Activated naive CD8-positive, alpha-beta T cell treated with anti-CD3 and anti-CD28 coated beads, Interleukin-2, amount 10 ng/mL, durations not matched to agents 7 days and 5 days (primary cell): ENCODE measurements at regions of chr12 and their contacts with region 1.

Region 1: GRCh38 chr12:123601602-123602489 is at the start of gene DDX55:
- DNase-seq: peak; percentile 89
- ATAC-seq: peak; percentile 90
- H3K4me3 Mint-ChIP-seq: peak within 1 kb of the TSS; percentile 93
- H3K27ac Mint-ChIP-seq: peak within 1 kb of the TSS; percentile 99
- H3K4me1 Mint-ChIP-seq: peaks cover 33% of the 10 kb centered on the region
- H3K27me3 Mint-ChIP-seq: no peaks in the 10 kb centered on the region
- total RNA-seq, gene DDX55: 34.5 to 39.3 TPM

Region 2: DNA sequence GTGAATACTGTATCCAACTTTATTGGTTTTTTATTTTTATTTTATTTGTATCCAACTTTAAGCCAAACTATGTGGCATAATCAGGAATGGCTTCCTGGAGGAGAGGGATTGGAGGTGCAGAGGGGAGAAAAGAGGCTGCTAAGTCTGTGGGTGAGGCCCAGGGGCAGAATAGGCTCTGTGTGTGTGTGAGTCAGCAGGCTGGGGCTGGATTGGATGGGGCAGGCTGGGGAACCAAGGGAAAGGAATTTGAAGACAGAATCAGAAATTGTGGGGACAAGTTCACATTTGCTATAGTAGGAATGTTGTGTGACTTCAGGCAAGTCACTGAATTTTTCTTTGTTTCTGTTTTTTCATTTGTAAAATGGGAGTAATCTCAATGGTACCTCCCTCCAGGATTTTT is 55.6 kb before region 1 on chr12:
- POLR2A ChIA-PET with region 1: no interaction called
- DNase-seq: no peak
- ATAC-seq: no peak
- H3K4me3 Mint-ChIP-seq: no peak overlapping the region
- H3K27ac Mint-ChIP-seq: no peak overlapping the region
- H3K4me1 Mint-ChIP-seq: no peaks in the 10 kb centered on the region
- H3K27me3 Mint-ChIP-seq: peaks cover 14% of the 10 kb centered on the region

Region 3: DNA sequence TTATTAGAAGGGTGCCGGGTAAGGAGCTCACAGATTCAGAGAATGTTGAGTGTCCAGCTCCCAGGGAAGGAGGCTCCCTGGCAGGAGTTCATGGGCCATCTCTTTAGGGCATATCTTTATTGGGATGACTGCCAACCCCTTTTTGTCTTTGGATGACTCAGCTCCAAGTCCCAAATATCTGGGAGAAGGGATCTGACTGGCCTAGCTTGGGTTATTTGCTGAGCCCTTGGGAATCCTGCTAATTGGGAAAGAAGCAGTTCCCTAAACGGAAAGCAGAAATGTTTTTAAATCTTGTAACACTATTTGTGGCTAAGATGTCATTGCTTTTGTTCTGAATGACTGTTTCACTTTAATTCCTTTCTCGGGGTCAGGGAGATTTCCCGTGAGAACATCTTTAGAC is 12.7 kb after region 1 on chr12:
- POLR2A ChIA-PET with region 1: interaction called, 11 read pairs
- DNase-seq: no peak
- ATAC-seq: no peak
- H3K4me3 Mint-ChIP-seq: no peak overlapping the region
- H3K27ac Mint-ChIP-seq: no peak overlapping the region
- H3K4me1 Mint-ChIP-seq: peaks cover 5% of the 10 kb centered on the region
- H3K27me3 Mint-ChIP-seq: no peaks in the 10 kb centered on the region